AG04450 (cell line): ENCODE measurements at regions of chr1 and their contacts with region 1.

Region 1: DNA sequence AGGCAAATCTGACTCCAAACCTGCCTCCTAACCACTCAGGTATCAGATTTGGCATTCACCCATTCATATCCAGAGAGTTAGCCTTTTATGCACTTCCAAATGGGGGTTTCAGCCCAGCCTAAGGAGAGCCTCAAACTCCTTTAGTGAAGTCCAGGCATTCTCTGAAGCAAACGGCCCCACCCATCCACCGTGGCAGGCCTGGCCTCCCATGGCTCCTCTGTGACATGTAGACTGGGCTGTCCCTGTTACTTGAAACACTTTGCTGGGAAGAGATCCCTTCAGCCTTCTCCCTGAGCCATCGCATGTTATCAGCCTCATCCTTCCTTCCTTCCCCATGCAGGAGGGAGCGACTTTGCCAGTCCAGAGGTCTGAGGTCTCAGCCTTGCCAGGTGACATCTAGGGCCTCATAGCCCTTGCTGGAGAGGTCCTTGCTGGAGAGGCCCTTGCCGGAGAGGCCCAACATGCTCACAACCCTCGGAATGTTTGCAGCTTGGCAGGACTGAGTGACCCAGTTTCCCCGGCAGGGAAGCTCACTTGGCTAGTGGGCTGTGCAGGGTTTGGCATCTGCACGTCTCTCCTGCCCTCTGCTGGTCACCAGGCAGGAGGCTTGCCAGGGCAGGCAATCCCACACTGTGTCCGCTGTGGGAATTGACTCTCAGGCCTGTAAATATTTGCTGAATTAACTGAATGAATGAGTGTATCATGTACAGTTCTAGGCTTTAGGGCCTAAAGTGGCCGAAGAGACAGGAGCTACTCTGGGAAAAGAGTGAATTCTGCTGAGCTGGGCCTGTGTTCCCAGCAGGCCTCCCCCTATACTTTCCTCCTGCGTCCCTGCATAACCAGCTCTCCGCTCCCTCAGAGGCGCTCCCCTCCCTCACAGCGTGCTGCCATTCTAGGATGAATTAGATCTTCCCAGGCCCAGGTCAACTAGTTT is 26.7 kb upstream of the RBM15 start:
- DNase-seq: peak; percentile 51
- H3K4me3 ChIP-seq: no peak overlapping the region
- H3K27ac ChIP-seq: no peak overlapping the region
- H3K27me3 ChIP-seq: no peaks in the 10 kb centered on the region
- CTCF ChIP-seq: peak; percentile 99

Region 2: DNA sequence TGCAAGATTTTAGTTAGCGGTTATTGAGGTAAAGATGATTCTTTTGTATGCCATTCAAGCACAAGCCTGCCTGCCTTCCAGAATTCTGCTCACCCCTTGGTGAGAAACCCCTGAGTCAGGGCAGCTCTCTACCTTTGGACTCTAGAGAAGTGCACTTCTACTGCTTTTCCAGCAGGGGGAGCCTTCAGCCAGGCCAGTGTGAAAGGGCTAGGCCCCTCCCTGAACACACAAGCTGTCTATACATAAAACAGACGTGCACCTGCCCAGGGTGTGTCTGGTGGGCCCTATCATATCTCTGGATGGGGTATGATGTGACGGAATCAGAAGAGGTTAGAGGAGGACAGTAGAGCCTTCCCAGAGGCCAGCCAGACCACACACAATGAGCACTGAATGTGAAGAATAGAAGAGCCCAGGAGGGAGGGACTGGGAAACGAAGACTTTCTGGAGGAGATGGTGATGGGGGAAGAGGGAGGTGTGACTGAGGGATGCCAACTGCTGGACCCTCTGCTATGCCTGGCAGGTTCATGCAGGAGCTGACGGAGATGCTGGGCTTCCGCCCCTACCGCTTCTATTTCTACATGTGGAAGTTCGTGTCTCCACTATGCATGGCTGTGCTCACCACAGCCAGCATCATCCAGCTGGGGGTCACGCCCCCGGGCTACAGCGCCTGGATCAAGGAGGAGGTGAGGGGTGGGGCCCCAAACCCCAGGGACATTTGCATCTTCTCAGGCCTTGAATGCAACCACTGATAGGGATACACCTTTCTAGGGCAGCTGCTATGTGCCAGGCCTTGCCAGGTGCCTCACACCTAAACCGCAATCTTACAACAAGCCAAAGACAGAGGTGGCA is 115.3 kb before region 1 on chr1:
- CTCF ChIA-PET with region 1: interaction called, 1,035 read pairs
- POLR2A ChIA-PET with region 1: interaction called, 3 read pairs
- DNase-seq: no peak
- H3K4me3 ChIP-seq: no peak overlapping the region
- H3K27ac ChIP-seq: no peak overlapping the region
- H3K27me3 ChIP-seq: peaks cover 3% of the 10 kb centered on the region
- CTCF ChIP-seq: peak; percentile 97

Region 3: DNA sequence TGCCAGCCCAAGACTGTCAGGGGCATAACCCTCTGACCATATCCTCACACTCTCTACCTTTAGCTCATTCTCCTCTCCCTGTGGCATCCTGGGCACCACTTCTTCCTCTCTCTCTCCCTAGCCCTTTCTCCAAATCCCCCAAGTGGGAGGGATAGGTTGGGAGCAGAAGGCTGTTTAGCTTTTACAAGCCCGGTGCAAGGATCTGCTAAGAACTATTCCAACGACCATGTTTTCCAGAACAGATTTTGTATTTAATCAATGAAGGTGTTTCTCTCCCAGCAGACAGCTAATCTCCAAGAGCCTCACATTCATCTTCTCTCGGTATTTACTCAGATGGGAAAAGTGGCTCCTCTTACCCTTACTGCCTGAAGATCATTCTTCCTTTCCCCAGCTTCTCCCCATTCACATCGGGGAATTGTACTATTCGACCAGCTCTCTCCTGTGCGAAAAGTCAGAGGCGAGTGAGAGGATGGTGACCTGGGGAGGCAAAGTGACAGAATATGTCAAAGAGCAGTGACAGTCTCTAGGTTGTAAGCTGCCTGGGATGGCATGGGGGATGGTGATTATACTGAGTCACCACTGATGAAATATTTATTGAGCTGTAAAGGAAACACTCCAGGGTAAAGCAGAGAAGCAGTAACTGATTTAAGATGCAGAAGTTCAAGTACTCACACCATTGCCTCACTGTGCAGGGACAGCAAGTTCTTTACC is 20.3 kb before region 1 on chr1:
- CTCF ChIA-PET with region 1: interaction called, 25 read pairs
- POLR2A ChIA-PET with region 1: no interaction called
- DNase-seq: no peak
- H3K4me3 ChIP-seq: no peak overlapping the region
- H3K27ac ChIP-seq: no peak overlapping the region
- H3K27me3 ChIP-seq: no peaks in the 10 kb centered on the region
- CTCF ChIP-seq: no peak

Region 4: GRCh38 chr1:110328274-110328673 is 15.8 kb after region 1 on chr1:
- CTCF ChIA-PET with region 1: interaction called, 50 read pairs
- POLR2A ChIA-PET with region 1: no interaction called
- DNase-seq: no peak
- H3K4me3 ChIP-seq: no peak overlapping the region
- H3K27ac ChIP-seq: no peak overlapping the region
- H3K27me3 ChIP-seq: peaks cover 3% of the 10 kb centered on the region
- CTCF ChIP-seq: no peak

Region 5: GRCh38 chr1:110338886-110339406 is 26.5 kb after region 1 on chr1 and contains the start of gene RBM15:
- CTCF ChIA-PET with region 1: interaction called, 50 read pairs
- POLR2A ChIA-PET with region 1: no interaction called
- DNase-seq: peak; percentile 100
- H3K4me3 ChIP-seq: peak within 1 kb of the TSS; percentile 98
- H3K27ac ChIP-seq: peak within 1 kb of the TSS; percentile 99
- H3K27me3 ChIP-seq: no peaks in the 10 kb centered on the region
- CTCF ChIP-seq: no peak
- polyA plus RNA-seq, gene RBM15: 8.9 and 9.6 TPM in 2 replicates

Region 6: DNA sequence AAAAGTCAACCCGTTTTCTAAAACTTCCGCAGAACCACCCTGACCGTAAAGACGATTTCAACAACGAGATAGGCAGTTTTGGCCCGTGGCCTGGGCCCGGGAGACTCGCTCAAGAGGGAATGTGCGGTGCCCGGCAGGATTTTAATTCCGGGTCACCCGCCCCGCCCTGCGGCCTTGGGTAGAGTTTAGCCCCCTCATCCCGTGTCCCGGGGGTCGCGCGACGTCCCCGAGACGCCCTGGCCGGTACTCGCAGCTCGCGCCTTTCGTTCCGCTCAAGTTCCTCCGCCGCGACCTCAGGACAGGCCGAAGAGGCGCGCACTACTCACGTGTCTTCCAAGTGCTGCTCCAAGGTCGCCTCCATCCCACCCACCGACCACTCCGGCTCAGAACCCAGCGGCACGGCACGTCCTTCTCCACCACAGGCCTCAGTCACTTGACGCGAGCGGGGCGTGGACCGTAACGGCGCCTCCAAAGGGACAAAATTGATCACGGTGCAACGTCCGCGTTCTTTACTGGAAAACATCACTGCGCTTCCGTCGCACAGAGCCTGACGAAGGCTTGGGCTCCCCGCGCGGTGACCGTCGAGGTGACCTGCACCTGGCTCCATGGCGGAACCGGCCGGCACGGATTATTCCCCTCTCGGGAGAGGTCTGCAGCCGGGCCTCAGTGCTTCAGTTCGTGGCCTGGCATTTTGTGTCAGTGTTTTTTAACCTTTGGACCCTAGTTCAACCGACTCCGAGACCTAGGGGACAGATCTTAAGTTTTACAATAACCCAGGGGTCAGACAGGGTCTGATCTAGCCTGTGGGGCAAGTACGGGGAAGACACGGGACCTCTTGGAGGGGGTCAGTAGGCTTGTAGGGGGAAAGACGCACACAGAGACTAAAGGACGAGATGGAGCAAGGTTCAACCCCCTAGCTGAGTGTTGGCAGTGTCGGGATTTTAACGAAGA is 95.1 kb after region 1 on chr1 and contains the start of gene LAMTOR5:
- CTCF ChIA-PET with region 1: interaction called, 13 read pairs
- POLR2A ChIA-PET with region 1: no interaction called
- DNase-seq: peak; percentile 65
- H3K4me3 ChIP-seq: peak within 1 kb of the TSS; percentile 98
- H3K27ac ChIP-seq: peak within 1 kb of the TSS; percentile 93
- H3K27me3 ChIP-seq: no peaks in the 10 kb centered on the region
- CTCF ChIP-seq: no peak
- polyA plus RNA-seq, gene LAMTOR5: 288 and 300 TPM in 2 replicates

Region 7: GRCh38 chr1:110455151-110455550 is 142.7 kb after region 1 on chr1:
- CTCF ChIA-PET with region 1: interaction called, 65 read pairs
- POLR2A ChIA-PET with region 1: no interaction called
- DNase-seq: no peak
- H3K4me3 ChIP-seq: no peak overlapping the region
- H3K27ac ChIP-seq: no peak overlapping the region
- H3K27me3 ChIP-seq: peaks cover 54% of the 10 kb centered on the region
- CTCF ChIP-seq: no peak